Dendritic cell treated with granulocyte-macrophage colony-stimulating factor and Interleukin-4, amounts not matched to agents 40 ng/mL and 50 ng/mL, for 4 days (primary cell): ENCODE measurements at regions of chr14 and their contacts with region 1.

Region 1: DNA sequence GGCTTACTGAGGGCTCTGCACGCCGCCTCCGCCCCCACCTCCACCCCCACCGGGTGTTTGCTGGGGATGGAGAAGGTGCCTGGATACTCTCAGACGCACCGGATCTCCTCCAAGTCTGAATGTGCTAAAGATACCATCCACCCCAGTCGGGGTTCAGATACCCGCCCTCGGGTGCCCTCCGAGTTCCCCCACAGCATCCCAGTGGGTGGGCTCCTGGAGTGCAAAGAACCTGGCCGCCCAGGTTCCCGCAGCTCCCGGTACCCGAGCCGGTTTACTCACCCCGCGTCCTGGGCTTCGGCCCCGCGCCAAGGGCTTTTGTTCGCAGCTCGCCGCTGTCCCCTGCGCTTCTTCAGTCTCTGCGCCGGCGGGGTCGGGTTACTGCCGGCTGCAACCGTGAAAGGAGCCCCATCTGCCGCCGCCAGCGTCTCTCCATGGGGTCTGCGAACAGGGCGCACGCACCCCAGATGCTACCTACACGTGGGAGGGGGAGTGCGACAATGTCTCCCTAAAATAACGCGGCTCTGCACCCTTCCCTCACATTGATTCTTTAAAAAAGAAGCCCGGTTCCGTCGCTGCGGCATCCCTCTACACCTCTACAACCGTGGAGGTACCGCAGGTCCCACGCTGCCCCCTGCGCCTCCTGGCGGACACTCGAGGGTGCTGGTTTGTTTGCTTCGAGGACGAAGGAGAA is at the start of gene CCDC177:
- H3K4me3 Mint-ChIP-seq: no peak within 1 kb of the TSS
- H3K27ac Mint-ChIP-seq: no peak within 1 kb of the TSS
- H3K4me1 Mint-ChIP-seq: peaks cover 12% of the 10 kb centered on the region
- H3K27me3 Mint-ChIP-seq: peaks cover 86% of the 10 kb centered on the region

Region 2: DNA sequence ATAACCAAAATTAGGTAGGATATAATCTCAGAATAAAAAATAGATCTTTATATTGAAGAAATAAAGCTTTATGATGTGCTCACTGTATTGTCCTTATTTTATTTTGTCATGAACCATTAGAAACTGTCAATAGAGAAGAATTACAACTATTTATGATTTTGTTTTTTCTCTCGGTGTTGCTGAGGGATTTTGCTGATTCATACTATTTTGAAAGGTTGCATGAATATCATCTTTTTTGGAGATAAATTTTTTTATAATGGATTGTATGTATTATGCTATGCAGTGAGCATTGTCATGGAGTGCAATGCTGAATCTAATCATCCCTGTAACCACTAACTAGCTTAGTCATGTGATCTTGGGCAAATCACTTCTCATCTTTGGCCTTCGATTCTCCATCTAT is 160.9 kb before region 1 on chr14:
- intact Hi-C with region 1: no loop called
- H3K4me3 Mint-ChIP-seq: no peak overlapping the region
- H3K27ac Mint-ChIP-seq: no peak overlapping the region
- H3K4me1 Mint-ChIP-seq: peaks cover 23% of the 10 kb centered on the region
- H3K27me3 Mint-ChIP-seq: no peaks in the 10 kb centered on the region

Region 3: DNA sequence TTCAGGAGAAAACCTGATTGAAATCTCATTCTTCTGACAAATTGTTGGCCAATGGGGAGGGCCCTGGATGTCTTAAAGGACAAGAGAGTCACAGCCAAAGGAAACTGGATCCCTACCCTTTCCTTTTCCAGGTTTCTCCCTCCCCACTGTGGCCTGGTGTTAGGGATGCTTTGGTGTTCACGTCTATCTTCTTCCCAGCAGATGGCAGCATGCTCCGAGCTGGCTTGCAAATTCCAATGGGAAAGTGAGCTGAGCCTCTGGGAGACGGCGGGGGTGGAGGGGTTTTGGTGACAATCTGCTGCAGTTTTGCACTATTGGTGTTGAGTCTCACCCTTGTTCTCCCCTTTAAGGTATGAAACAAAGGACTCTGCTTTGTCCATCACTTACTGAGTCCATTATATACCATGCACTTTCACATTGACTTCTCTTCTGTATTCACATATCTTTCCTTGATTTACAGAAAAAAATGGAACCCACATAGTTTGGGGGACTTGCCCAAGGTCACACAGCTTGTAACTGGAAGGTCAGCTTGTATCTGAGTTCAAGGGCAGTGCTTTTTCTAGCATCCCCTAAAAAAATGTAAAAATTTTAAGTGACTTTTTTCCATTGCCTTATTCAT is 39.1 kb before region 1 on chr14:
- intact Hi-C with region 1: loop called (anchors 1 kb)
- H3K4me3 Mint-ChIP-seq: no peak overlapping the region
- H3K27ac Mint-ChIP-seq: no peak overlapping the region
- H3K4me1 Mint-ChIP-seq: no peaks in the 10 kb centered on the region
- H3K27me3 Mint-ChIP-seq: peaks cover 11% of the 10 kb centered on the region

Region 4: GRCh38 chr14:69553221-69553620 is 21.2 kb before region 1 on chr14:
- intact Hi-C with region 1: no loop called
- H3K4me3 Mint-ChIP-seq: no peak overlapping the region
- H3K27ac Mint-ChIP-seq: no peak overlapping the region
- H3K4me1 Mint-ChIP-seq: peaks cover 26% of the 10 kb centered on the region
- H3K27me3 Mint-ChIP-seq: peaks cover 38% of the 10 kb centered on the region